SK-N-SH (cell line): ENCODE measurements at regions of chr20 and their contacts with region 1.

Region 1: DNA sequence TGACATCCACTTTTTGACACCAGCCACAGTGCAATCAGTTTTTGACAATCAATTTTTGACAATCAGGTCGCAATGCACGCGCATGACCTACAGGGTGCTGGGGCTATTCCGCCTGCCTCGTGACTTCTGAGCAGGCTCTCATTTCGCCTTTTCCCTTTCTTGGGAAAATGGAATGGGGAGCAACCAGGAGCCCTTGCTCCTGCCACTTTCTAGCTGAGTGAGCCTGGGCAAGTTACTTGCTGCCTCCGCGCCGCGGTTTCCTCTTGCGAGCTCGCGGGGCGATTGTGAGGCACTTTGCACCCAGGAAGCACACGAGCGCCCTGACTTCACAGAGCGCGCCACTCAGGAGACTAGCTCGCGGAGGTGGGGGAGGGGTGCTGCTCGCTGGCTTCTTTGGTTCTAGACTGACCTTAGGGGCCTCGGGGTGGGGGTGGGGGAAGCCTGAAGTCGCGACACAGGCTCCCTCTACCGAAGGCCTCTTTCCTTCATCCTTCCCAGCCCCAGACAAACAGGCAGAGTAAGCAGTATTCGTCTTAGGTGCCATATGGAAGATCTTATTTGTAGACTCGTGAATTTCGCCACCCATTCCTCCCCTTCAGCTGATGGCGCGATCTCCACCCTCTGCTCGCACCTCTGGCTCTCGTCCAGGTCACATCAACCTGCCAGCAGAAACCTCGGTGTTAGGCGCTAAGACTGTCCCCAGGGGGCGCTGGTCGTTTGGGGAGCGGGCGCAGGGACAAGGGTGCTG is 4.6 kb downstream of the TP53TG5 start:
- DNase-seq: peak; percentile 83
- H3K4me3 ChIP-seq: no peak overlapping the region
- H3K27ac ChIP-seq: no peak overlapping the region
- H3K4me1 ChIP-seq: no peaks in the 10 kb centered on the region
- H3K27me3 ChIP-seq: no peaks in the 10 kb centered on the region
- CTCF ChIP-seq: peak; percentile 76
- EP300 ChIP-seq: no peak
- RAD21 ChIP-seq: peak; percentile 74

Region 2: DNA sequence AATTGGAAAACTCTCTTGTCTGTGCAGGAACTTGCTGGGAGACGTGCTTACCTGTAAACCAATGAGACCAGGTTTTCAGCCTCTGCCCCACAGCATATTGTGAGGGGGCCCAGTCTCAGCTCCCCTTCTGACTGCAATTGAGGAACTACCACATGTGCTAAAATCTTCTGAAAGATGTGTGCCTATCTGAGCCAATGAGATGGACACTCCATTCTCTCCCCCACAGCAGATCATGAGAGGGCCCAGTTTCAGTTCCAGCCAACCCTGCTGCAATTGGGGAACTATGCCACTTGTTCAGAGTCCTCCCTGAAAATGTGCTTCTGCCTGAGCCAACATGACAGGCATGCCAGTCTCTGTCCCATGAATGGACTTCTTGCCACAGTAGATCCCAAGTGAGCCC is 219.8 kb before region 1 on chr20:
- CTCF ChIA-PET with region 1: no interaction called
- POLR2A ChIA-PET with region 1: no interaction called
- DNase-seq: no peak
- H3K4me3 ChIP-seq: no peak overlapping the region
- H3K27ac ChIP-seq: no peak overlapping the region
- H3K4me1 ChIP-seq: no peaks in the 10 kb centered on the region; a peak in 1 of 4 replicates
- H3K27me3 ChIP-seq: peaks cover 8% of the 10 kb centered on the region; the same call in 1 of the 2 replicates
- CTCF ChIP-seq: no peak
- EP300 ChIP-seq: no peak
- RAD21 ChIP-seq: no peak

Region 3: GRCh38 chr20:45223136-45223535 is 150.4 kb before region 1 on chr20:
- CTCF ChIA-PET with region 1: no interaction called
- POLR2A ChIA-PET with region 1: no interaction called
- DNase-seq: no peak
- H3K4me3 ChIP-seq: no peak overlapping the region
- H3K27ac ChIP-seq: no peak overlapping the region
- H3K4me1 ChIP-seq: no peaks in the 10 kb centered on the region
- H3K27me3 ChIP-seq: peaks cover 12% of the 10 kb centered on the region; the same call in 1 of the 2 replicates
- CTCF ChIP-seq: no peak
- EP300 ChIP-seq: no peak
- RAD21 ChIP-seq: no peak

Region 4: DNA sequence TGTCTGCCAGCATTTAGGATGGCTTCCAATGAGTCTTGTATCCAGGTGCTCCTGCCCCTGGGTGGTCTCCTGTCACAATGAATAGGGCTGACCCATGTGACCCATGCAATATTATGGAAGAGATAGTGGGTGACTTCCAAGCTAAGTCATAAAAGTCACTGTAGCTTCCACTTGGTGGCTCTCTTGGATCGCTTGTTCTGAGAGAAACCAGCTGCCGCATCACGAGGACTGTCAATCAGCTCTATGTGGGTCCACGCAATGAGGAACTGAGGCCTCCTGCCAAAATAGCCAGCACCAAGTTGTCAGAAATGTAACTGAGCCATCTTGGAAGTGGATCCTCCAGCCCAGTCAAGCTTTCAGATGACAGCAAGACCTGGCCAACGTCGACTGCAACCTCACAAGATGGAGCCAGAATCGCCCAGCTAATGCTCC is 50.6 kb before region 1 on chr20:
- CTCF ChIA-PET with region 1: interaction called, 17 read pairs
- POLR2A ChIA-PET with region 1: no interaction called
- DNase-seq: no peak
- H3K4me3 ChIP-seq: no peak overlapping the region
- H3K27ac ChIP-seq: no peak overlapping the region
- H3K4me1 ChIP-seq: peaks cover 0 to 8% of the 10 kb centered on the region in 2 experiments; a peak in 1 of 4 replicates
- H3K27me3 ChIP-seq: no peaks in the 10 kb centered on the region
- CTCF ChIP-seq: peak; percentile 31; the same call in 1 of the 2 replicates
- EP300 ChIP-seq: no peak
- RAD21 ChIP-seq: peak; percentile 65

Region 5: DNA sequence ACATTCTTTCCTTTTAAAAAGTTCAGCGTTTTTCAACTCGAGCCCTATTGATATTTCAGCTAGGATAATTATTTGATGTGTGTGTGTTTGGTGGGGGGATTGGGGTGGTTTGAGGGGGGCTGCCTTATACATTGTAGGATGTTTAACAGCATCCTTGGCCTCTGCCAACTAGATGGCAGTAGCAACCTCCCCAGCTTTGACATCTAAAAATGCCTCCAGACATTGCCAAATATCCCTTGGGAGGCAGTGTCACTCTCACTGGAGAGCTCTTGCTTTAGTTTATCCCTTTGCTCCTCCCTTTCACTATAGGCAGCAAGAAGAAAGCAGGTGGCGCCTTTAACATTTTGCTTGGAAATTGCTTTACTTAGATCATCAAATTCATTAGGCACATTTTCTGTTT is 19.2 kb after region 1 on chr20:
- CTCF ChIA-PET with region 1: interaction called, 20 read pairs
- POLR2A ChIA-PET with region 1: no interaction called
- DNase-seq: no peak
- H3K4me3 ChIP-seq: no peak overlapping the region
- H3K27ac ChIP-seq: no peak overlapping the region
- H3K4me1 ChIP-seq: no peaks in the 10 kb centered on the region
- H3K27me3 ChIP-seq: no peaks in the 10 kb centered on the region
- CTCF ChIP-seq: no peak
- EP300 ChIP-seq: no peak
- RAD21 ChIP-seq: no peak

Region 6: DNA sequence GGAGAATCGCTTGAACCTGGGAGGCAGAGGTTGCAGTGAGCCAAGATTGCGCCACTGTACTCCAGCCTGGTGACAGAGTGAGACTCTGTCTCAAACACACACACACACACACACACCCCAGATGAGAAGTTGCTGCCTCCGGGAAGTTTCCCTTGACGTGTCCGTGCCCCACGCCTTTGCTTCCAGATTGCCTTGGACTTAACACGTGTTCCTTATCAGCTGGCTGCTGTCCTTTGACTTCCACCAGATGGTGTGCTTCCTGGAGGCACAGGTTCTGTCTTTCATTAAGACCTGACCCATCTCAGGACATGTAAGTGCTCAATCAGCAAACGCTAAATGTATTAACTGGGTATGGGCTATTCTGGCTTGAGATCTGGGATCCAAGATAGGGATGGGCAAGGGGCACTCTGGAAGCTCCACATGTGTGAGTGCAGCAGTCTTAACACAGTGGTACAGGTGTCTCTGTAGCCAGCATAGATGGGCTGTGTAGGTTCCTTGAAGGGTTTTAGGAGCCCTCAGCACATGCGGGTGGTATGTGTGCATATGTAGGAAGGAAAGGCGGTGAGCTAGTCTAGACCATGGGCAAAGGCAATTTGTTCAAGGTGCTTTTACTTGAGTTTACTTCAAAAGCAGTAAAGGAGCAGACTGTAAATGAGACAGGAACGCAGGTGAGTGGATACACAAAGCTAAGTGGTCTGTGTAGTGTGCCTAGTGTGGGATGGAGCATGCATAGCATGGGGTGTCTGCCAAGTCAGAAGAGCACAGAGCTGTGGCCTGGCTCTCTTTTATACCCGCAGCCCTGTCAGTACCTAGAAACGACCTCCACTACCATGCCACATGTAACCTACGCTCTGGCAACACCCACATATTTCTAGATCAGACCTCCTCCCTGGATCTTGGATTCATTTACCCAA is 54.0 kb after region 1 on chr20:
- CTCF ChIA-PET with region 1: interaction called, 19 read pairs
- POLR2A ChIA-PET with region 1: interaction called, 4 read pairs
- DNase-seq: peak; percentile 80
- H3K4me3 ChIP-seq: no peak overlapping the region
- H3K27ac ChIP-seq: peak overlapping the region in 1 of 2 experiments; percentile 64; a peak in 2 of 4 replicates
- H3K4me1 ChIP-seq: peaks cover 0 to 20% of the 10 kb centered on the region in 2 experiments; a peak in 1 of 4 replicates
- H3K27me3 ChIP-seq: no peaks in the 10 kb centered on the region
- CTCF ChIP-seq: no peak
- EP300 ChIP-seq: peak in 1 of 2 experiments; percentile 86; a peak in 2 of 4 replicates
- RAD21 ChIP-seq: no peak

Region 7: GRCh38 chr20:45456632-45457031 is 83.1 kb after region 1 on chr20:
- CTCF ChIA-PET with region 1: interaction called, 39 read pairs
- POLR2A ChIA-PET with region 1: no interaction called
- DNase-seq: no peak
- H3K4me3 ChIP-seq: no peak overlapping the region
- H3K27ac ChIP-seq: no peak overlapping the region
- H3K4me1 ChIP-seq: no peaks in the 10 kb centered on the region
- H3K27me3 ChIP-seq: peaks cover 28% of the 10 kb centered on the region; the same call in 1 of the 2 replicates
- CTCF ChIP-seq: peak; percentile 36; the same call in 1 of the 2 replicates
- EP300 ChIP-seq: no peak
- RAD21 ChIP-seq: no peak